Lower leg skin (tissue), 4 donors: ENCODE measurements at regions of chr4 and their contacts with region 1.

Region 1: GRCh38 chr4:93764639-93765246 is 63.8 kb upstream of the ATOH1 start:
- DNase-seq: peak in 1 of 2 donors; percentile 17
- H3K4me3 ChIP-seq: no peak overlapping the region
- CTCF ChIP-seq: no peak
- POLR2A ChIP-seq: no peak

Region 2: DNA sequence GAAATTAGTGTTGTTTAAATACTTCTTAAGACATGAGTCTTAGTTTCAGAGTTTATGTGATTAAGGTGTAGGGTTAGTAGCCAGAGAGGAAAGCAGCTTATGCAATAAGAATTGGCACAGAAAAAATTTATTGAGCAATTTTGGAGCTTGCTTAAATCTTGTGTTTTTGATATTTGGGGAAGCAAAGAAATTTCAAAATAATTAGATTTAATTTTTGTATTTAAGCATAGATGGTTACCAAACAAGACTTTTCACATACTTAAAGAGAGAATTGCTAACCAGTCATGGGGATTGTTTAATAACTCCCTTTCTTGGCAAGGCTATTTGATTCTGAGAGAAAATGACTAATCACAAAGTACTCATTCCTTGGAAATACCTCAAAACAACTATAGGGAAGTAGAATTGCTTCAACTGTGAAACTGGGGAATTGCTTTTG is 1663.0 kb before region 1 on chr4:
- intact Hi-C with region 1: loop called (anchors 5 kb)
- DNase-seq: no peak
- H3K4me3 ChIP-seq: no peak overlapping the region
- CTCF ChIP-seq: no peak
- POLR2A ChIP-seq: no peak

Region 3: GRCh38 chr4:93748943-93749761 is 15.6 kb before region 1 on chr4:
- intact Hi-C with region 1: no loop called
- DNase-seq: no peak
- H3K4me3 ChIP-seq: no peak overlapping the region
- CTCF ChIP-seq: no peak
- POLR2A ChIP-seq: no peak